Spleen (tissue), 13 donors: ENCODE measurements at regions of chr5 and their contacts with region 1.

Region 1: GRCh38 chr5:61331407-61332357 is at the start of gene ZSWIM6:
- DNase-seq: peak; percentile 99
- H3K4me3 ChIP-seq: peak within 1 kb of the TSS; percentile 78 to 99 (median 96)
- H3K27ac ChIP-seq: peak within 1 kb of the TSS; percentile 90 to 98 (median 96)
- H3K4me1 ChIP-seq: peaks cover 24 to 61% (median 40%) of the 10 kb centered on the region in 6 donors
- H3K27me3 ChIP-seq: peaks cover 0 to 4% (median 0%) of the 10 kb centered on the region in 7 donors
- CTCF ChIP-seq: peak in 1 of 11 experiments; percentile 0
- POLR2A ChIP-seq: peak; percentile 88 to 98 (median 98)
- total RNA-seq, gene ZSWIM6: 15.7 to 22.9 (median 19.1) TPM

Region 2: DNA sequence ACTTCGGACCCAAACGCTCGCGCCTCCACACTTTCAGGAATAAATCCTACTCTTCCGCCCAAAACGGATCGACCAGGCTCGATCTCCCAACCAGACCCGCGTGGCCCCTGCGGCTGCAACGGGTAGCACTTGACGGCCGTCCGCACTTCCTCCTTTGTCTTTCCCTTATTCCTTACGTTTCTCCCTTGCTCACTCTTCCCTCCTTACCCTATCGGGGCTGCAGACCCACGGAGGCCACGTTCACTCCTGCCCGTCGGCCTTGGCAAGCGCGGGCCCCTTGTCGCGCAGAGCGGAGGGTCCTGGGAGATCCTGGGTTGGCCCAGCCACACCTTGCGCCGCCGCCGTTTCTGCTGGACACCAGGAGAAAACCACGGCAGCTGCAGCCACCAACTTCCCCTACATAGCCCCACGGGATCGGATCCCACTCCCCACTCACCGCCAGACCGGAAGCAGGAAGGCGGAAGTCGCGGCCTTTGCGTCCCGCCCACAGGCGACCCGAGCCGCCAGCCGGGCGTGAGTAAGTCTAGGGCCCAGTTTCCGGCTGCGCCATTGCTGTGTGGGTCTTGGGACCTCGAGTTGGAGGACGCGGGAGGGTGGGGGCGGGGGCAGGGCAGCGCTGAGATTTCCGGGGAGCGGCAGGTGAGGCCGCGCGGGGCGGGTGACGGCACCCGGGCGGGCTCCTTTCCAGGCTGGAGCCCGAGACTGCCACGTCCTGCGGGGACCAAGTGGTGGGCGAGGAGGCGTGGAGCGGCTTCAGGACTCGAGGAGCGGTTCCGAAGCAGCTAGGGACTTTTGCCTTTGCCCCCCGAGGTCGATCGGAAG is 169.5 kb before region 1 on chr5 and contains the start of gene SMIM15:
- intact Hi-C with region 1: loop called (anchors 10 kb)
- DNase-seq: peak; percentile 96
- H3K4me3 ChIP-seq: peak within 1 kb of the TSS; percentile 74 to 91 (median 76)
- H3K27ac ChIP-seq: peak within 1 kb of the TSS; percentile 91 to 96 (median 94)
- H3K4me1 ChIP-seq: peaks cover 8 to 59% (median 39%) of the 10 kb centered on the region in 6 donors
- H3K27me3 ChIP-seq: no peaks in the 10 kb centered on the region
- CTCF ChIP-seq: peak in 2 of 11 experiments; percentile 13 to 22
- POLR2A ChIP-seq: peak in 2 of 3 donors; percentile 26 to 35
- total RNA-seq, gene SMIM15: 24.0 to 42.9 (median 38.7) TPM

Region 3: DNA sequence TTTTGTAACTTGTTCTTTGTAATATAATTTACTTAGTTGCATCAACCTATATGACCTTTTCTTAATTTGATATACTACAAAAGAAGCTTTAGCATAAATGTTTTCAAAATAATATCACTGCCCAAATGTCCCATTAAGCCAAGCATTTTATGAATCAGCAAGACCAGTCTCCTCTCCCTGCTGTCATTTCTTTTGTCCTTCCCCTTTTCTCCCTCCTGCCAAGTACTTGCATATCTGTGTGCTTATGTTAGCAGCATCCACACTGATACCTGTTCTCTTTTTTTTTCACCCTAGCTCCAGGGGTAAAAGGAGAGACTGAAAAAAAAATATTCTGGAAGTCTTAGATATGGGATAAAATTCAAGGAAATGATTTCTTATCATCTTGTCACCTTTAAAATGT is 70.0 kb after region 1 on chr5:
- intact Hi-C with region 1: loop called (anchors 5 kb)
- DNase-seq: no peak
- H3K4me3 ChIP-seq: no peak overlapping the region
- H3K27ac ChIP-seq: no peak overlapping the region
- H3K4me1 ChIP-seq: peaks cover 0 to 58% (median 23%) of the 10 kb centered on the region in 6 donors
- H3K27me3 ChIP-seq: no peaks in the 10 kb centered on the region
- CTCF ChIP-seq: no peak
- POLR2A ChIP-seq: no peak

Region 4: GRCh38 chr5:62043289-62044280 is 711.9 kb after region 1 on chr5:
- intact Hi-C with region 1: no loop called
- DNase-seq: no peak
- H3K4me3 ChIP-seq: no peak overlapping the region
- H3K27ac ChIP-seq: no peak overlapping the region
- H3K4me1 ChIP-seq: no peaks in the 10 kb centered on the region
- H3K27me3 ChIP-seq: peaks cover 0 to 4% (median 0%) of the 10 kb centered on the region in 7 donors
- CTCF ChIP-seq: no peak
- POLR2A ChIP-seq: no peak